Heart left ventricle (tissue), 16 donors: ENCODE measurements at regions of chr1 and their contacts with region 1.

Region 1: GRCh38 chr1:174217787-174218574 is 58.7 kb downstream of the RABGAP1L start:
- DNase-seq: no peak
- ATAC-seq: peak in 2 of 4 donors; percentile 62 to 70
- H3K4me3 ChIP-seq: no peak overlapping the region
- H3K27ac ChIP-seq: peak overlapping the region in 2 of 12 donors; percentile 5 to 34
- H3K4me1 ChIP-seq: peaks cover 0 to 19% (median 3%) of the 10 kb centered on the region in 12 donors
- H3K27me3 ChIP-seq: no peaks in the 10 kb centered on the region
- CTCF ChIP-seq: peak; percentile 62 to 86 (median 76)
- POLR2A ChIP-seq: no peak

Region 2: DNA sequence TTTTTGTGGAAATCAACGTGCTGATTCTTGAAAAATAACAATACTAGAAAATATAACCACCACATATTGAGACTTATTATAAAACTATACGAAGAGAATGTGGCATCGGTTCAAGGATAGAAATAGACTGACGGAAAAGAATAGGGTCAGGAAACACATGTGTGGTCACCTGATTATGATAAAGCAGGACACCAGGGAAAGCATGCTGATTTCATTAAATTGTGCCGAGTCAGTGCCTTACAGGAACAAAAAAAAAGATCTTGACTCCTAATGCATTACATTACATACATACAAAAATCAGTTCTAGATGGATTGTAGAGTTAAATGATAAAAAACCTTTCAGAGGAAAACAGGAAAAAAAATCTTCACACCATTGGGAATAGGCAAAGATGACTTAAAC is 257.4 kb before region 1 on chr1:
- intact Hi-C with region 1: loop called in 1 of 10 experiments (anchors 10 kb)
- DNase-seq: no peak
- ATAC-seq: no peak
- H3K4me3 ChIP-seq: no peak overlapping the region
- H3K27ac ChIP-seq: peak overlapping the region in 2 of 12 donors; percentile 1 to 9
- H3K4me1 ChIP-seq: peaks cover 0 to 11% (median 5%) of the 10 kb centered on the region in 12 donors
- H3K27me3 ChIP-seq: no peaks in the 10 kb centered on the region
- CTCF ChIP-seq: no peak
- POLR2A ChIP-seq: no peak

Region 3: DNA sequence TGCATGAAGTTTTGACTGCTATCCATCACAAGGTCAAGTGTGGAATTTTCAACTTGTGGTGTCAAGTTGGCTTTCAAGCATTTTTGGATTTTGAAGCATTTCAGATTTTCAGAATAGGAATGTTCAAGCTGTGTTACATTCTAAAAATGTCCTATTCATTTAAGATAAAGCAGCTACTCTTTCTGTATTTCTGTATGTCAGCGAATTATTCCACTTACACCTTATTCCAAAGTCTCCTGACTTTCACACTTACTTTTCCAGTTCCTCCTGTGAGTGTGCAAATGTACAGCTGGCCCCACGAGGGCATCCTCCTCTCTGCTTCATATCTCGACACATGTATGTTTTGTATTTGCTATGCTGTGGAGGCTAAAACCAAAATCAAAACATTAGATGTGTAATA is 247.7 kb before region 1 on chr1:
- intact Hi-C with region 1: loop called in 3 of 10 experiments (anchors 10 kb)
- DNase-seq: no peak
- ATAC-seq: no peak
- H3K4me3 ChIP-seq: no peak overlapping the region
- H3K27ac ChIP-seq: no peak overlapping the region
- H3K4me1 ChIP-seq: no peaks in the 10 kb centered on the region
- H3K27me3 ChIP-seq: no peaks in the 10 kb centered on the region
- CTCF ChIP-seq: no peak
- POLR2A ChIP-seq: no peak

Region 4: DNA sequence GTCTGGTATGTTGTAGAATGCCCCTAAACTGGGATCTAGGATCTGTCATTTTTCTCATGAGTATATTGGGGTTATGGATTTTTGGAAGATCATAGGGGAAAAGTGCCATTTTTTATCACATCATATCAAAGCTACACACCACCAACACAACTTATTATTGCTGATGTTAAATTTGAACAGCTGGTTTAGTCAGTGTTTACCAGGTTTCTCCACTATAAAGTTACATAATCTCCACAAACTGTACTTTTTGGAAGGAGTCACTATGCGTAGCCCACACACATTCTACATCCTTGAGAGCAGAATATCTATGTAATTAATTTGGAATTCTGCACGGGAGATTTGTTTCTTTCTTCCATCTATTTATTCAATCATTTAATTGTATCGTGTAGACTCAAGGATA is 231.0 kb before region 1 on chr1:
- intact Hi-C with region 1: loop called in 2 of 10 experiments (anchors 10 kb)
- DNase-seq: no peak
- ATAC-seq: no peak
- H3K4me3 ChIP-seq: no peak overlapping the region
- H3K27ac ChIP-seq: no peak overlapping the region
- H3K4me1 ChIP-seq: no peaks in the 10 kb centered on the region
- H3K27me3 ChIP-seq: no peaks in the 10 kb centered on the region
- CTCF ChIP-seq: no peak
- POLR2A ChIP-seq: no peak

Region 5: GRCh38 chr1:174022080-174022975 is 195.7 kb before region 1 on chr1 and contains the start of gene RC3H1:
- intact Hi-C with region 1: loop called in 1 of 10 experiments (anchors 10 kb)
- DNase-seq: peak; percentile 93 to 97 (median 94)
- ATAC-seq: peak; percentile 95 to 99 (median 98)
- H3K4me3 ChIP-seq: peak within 1 kb of the TSS; percentile 72 to 94 (median 85)
- H3K27ac ChIP-seq: peak within 1 kb of the TSS; percentile 84 to 99 (median 96)
- H3K4me1 ChIP-seq: peaks cover 5 to 52% (median 46%) of the 10 kb centered on the region in 12 donors
- H3K27me3 ChIP-seq: no peaks in the 10 kb centered on the region
- CTCF ChIP-seq: no peak
- POLR2A ChIP-seq: peak; percentile 86 to 99
- total RNA-seq, gene RC3H1: 14.7 to 32.0 (median 25.5) TPM

Region 6: DNA sequence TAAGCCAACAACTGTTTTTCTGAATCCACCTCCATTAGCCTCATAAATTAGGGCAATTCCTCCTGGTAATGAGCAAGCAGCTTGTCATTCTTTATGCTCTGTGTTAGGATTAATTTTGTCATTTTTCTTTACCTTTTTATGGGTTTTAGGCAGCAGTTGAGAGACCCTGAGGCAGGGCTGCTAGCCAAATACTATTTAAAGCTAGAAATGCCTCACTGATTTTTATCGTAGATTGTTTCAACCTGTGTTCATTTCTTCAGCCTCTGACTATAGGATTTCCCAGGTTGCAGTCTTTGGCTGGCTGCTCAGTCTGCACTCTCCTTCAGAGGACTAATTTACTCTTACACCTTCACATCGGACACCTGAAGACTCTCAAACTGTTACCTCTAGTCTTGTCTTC is 120.6 kb before region 1 on chr1:
- intact Hi-C with region 1: loop called in 9 of 10 experiments (anchors 1 to 5 kb)
- DNase-seq: no peak
- ATAC-seq: no peak
- H3K4me3 ChIP-seq: no peak overlapping the region
- H3K27ac ChIP-seq: no peak overlapping the region
- H3K4me1 ChIP-seq: no peaks in the 10 kb centered on the region
- H3K27me3 ChIP-seq: no peaks in the 10 kb centered on the region
- CTCF ChIP-seq: no peak
- POLR2A ChIP-seq: no peak

Region 7: GRCh38 chr1:174114788-174115448 is 103.1 kb before region 1 on chr1:
- intact Hi-C with region 1: loop called in 2 of 10 experiments (anchors 5 to 10 kb)
- DNase-seq: no peak
- ATAC-seq: peak in 3 of 4 donors; percentile 34 to 77 (median 48)
- H3K4me3 ChIP-seq: no peak overlapping the region
- H3K27ac ChIP-seq: no peak overlapping the region
- H3K4me1 ChIP-seq: peaks cover 0 to 17% (median 0%) of the 10 kb centered on the region in 12 donors
- H3K27me3 ChIP-seq: no peaks in the 10 kb centered on the region
- CTCF ChIP-seq: peak; percentile 32 to 75 (median 52)
- POLR2A ChIP-seq: no peak

Region 8: GRCh38 chr1:174258148-174258550 is 40.2 kb after region 1 on chr1:
- intact Hi-C with region 1: no loop called
- DNase-seq: no peak
- ATAC-seq: peak in 3 of 4 donors; percentile 31 to 54 (median 39)
- H3K4me3 ChIP-seq: no peak overlapping the region
- H3K27ac ChIP-seq: no peak overlapping the region
- H3K4me1 ChIP-seq: peaks cover 0 to 7% (median 0%) of the 10 kb centered on the region in 12 donors
- H3K27me3 ChIP-seq: no peaks in the 10 kb centered on the region
- CTCF ChIP-seq: peak; percentile 17 to 64 (median 54)
- POLR2A ChIP-seq: no peak

Region 9: DNA sequence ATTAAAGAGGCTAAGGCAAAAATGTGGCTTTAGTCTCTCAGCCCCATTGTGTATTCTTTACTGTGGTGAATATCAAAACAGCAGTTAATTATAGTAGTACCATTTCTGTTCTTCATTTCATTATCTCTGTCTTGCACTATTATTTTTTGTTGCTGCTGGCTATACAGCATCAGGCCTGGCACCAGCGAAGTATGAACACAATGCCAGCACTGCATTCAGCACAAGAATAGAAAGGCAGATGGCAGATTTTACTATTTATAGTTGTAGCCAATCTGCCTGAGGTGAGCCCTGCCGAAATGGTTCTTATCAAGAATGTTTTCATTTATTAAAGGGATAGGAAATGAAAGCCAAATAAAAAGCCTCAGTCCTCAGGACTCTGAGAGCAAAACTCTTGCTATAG is 301.9 kb after region 1 on chr1:
- intact Hi-C with region 1: no loop called
- DNase-seq: peak in 4 of 5 donors; percentile 33 to 57 (median 51)
- ATAC-seq: peak; percentile 94 to 97 (median 96)
- H3K4me3 ChIP-seq: no peak overlapping the region
- H3K27ac ChIP-seq: peak overlapping the region in 8 of 12 donors; percentile 40 to 76 (median 60)
- H3K4me1 ChIP-seq: peaks cover 0 to 29% (median 3%) of the 10 kb centered on the region in 12 donors
- H3K27me3 ChIP-seq: no peaks in the 10 kb centered on the region
- CTCF ChIP-seq: no peak
- POLR2A ChIP-seq: no peak